ENCODE measurements at regions of chr14 and their contacts with region 1.

Region 1: DNA sequence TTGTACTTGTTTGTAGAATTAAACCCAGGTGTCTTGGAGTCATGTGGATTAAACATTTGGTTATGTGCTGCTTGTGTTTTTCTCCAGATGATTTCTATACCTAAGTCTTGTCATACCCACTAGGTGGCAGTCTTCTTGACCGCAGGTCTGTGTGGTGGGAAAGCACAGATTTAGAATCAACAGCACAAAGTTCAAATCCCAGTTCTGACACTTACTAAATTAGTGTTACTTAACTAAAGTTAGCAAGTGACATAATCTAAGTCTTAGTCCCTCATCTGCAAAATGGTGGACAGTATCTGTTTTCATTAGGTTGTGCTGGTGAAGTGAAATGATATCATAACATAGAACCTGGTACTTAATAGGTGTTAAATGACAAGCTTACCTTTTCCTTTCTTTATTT is 151.0 kb upstream of the ARHGAP5 start:
- DNase-seq: peak; percentile 57
- CTCF ChIP-seq: peak; percentile 49

Region 2: GRCh38 chr14:31913370-31913769 is 12.8 kb before region 1 on chr14:
- CTCF ChIA-PET with region 1: interaction called, 16 read pairs
- POLR2A ChIA-PET with region 1: no interaction called
- DNase-seq: no peak
- CTCF ChIP-seq: no peak

Region 3: GRCh38 chr14:31937721-31938346 is 11.7 kb after region 1 on chr14:
- CTCF ChIA-PET with region 1: interaction called, 40 read pairs
- POLR2A ChIA-PET with region 1: no interaction called
- DNase-seq: peak; percentile 67
- CTCF ChIP-seq: no peak

Region 4: GRCh38 chr14:32244404-32244803 is 318.3 kb after region 1 on chr14:
- CTCF ChIA-PET with region 1: interaction called, 95 read pairs
- POLR2A ChIA-PET with region 1: no interaction called
- DNase-seq: no peak
- CTCF ChIP-seq: peak; percentile 28

Region 5: DNA sequence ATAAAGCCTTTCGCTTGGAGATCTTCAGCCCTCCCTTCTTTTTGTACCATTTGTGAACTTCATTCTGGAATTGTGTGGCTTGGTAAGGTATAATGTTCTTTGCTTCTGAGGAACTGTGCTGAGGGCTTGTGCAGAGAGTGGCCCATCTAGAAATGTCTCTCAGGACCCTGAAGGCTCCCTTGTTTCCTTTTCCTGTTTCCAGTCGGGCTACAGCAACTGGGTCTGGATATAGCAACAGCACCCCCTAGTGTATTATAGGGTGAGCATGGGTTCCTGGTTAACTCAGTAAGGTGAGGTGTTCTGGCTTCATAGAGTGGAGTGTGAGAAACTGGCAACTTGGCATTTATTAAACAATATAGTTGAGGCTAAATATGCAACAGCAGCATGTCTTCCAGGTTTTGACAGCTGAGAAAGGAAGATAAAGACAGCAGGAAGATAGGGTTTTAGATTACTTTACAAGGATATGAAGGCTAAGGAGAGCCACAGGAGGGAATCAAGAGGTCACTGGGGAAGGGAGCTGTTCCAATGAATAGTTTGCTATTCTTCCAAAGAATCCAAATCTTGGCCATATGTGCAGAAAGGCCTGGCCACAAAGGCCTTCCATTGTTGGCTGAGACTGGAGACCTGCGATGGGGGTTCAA is 326.0 kb after region 1 on chr14:
- CTCF ChIA-PET with region 1: interaction called, 95 read pairs
- POLR2A ChIA-PET with region 1: no interaction called
- DNase-seq: peak; percentile 60
- CTCF ChIP-seq: peak; percentile 86

Region 6: GRCh38 chr14:32259368-32260013 is 333.4 kb after region 1 on chr14:
- CTCF ChIA-PET with region 1: interaction called, 95 read pairs
- POLR2A ChIA-PET with region 1: no interaction called
- DNase-seq: peak; percentile 42
- CTCF ChIP-seq: no peak

Region 7: DNA sequence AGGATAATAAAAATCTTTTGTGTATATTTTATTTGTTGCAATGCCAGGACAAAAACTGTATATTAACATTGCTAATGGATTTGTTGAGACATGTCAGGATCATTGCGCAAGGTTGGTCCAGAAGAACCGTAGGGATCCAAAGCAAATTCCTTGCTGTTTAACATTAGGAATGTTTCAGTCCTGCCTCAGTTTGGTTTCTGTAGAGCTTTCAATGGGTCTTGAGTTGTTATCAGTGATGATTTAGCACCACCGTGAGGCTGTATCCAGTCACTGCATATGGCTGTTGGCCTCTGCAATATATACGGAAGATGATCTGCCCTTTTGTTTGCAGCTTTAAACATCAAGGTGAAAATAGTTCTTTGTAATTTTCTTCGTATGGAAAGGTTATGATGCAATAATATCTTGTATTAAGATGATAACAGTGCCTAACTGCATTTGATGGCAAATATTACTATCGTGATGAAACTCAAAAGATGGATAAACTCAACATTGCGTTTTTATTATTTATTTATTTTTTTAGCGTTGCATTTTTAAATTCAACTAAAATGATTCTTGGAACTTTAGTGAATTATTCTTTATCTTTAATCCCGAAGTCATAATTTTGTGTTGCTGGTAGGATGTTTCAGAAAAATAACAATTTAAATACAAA is 634.2 kb after region 1 on chr14:
- CTCF ChIA-PET with region 1: interaction called, 12 read pairs
- POLR2A ChIA-PET with region 1: no interaction called
- DNase-seq: peak; percentile 41
- CTCF ChIP-seq: peak; percentile 84

Measured in GM10248 (cell line).